Heart left ventricle (tissue), 16 donors: ENCODE measurements at regions of chr12 and their contacts with region 1.

Region 1: DNA sequence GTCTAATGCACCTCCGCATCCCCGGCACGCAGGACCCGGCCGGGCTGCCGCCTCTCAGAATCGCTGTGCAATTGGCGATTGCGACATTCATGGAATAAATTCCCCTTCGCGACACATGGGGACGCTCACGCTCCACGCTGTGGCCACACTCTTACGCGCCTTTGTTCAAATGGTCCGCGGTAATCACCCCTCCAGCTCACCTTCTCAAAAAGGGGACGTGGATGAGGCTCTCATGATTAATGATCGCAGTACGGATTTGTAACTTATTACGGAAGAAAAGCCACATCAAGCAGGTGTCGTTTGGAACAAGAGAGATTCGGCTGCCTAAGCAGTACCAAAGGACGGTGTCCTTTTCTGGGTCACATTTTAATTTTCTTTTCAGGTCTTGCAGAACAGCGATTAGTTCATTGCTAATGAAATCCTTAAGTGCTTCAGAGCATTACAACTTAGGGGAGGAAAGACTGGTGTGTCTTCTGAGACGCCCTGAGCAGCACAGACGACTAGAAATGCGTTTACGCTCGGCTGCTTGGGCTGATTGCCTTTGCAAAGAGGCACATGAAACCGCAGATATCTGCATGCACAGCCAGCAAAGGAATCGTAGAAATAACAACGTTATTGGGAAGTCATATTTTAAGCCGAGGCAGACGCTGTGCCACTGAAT is 37.3 kb upstream of the ADGRD1 start:
- DNase-seq: peak; percentile 53 to 76 (median 59)
- ATAC-seq: peak; percentile 76 to 90 (median 84)
- H3K4me3 ChIP-seq: peak overlapping the region in 5 of 12 donors; percentile 6 to 45 (median 34)
- H3K27ac ChIP-seq: peak overlapping the region in 1 of 12 donors; percentile 39
- H3K4me1 ChIP-seq: peaks cover 0 to 8% (median 0%) of the 10 kb centered on the region in 12 donors
- H3K27me3 ChIP-seq: peaks cover 0 to 12% (median 4%) of the 10 kb centered on the region in 9 donors
- CTCF ChIP-seq: peak; percentile 79 to 99 (median 95)
- POLR2A ChIP-seq: no peak

Region 2: GRCh38 chr12:130796985-130797686 is 119.2 kb before region 1 on chr12:
- intact Hi-C with region 1: no loop called
- DNase-seq: peak in 1 of 5 donors; percentile 37
- ATAC-seq: no peak
- H3K4me3 ChIP-seq: peak overlapping the region in 1 of 12 donors; percentile 1
- H3K27ac ChIP-seq: no peak overlapping the region
- H3K4me1 ChIP-seq: no peaks in the 10 kb centered on the region
- H3K27me3 ChIP-seq: no peaks in the 10 kb centered on the region
- CTCF ChIP-seq: no peak
- POLR2A ChIP-seq: no peak

Region 3: GRCh38 chr12:131092901-131093603 is 176.7 kb after region 1 on chr12:
- intact Hi-C with region 1: loop called in 1 of 10 experiments (anchors 10 kb)
- DNase-seq: peak in 3 of 5 donors; percentile 6 to 29 (median 18)
- ATAC-seq: no peak
- H3K4me3 ChIP-seq: no peak overlapping the region
- H3K27ac ChIP-seq: no peak overlapping the region
- H3K4me1 ChIP-seq: peaks cover 0 to 25% (median 8%) of the 10 kb centered on the region in 12 donors
- H3K27me3 ChIP-seq: no peaks in the 10 kb centered on the region
- CTCF ChIP-seq: no peak
- POLR2A ChIP-seq: no peak

Region 4: GRCh38 chr12:131132118-131132892 is 215.9 kb after region 1 on chr12:
- intact Hi-C with region 1: loop called (anchors 1 to 10 kb)
- DNase-seq: peak; percentile 67 to 87 (median 74)
- ATAC-seq: peak; percentile 45 to 88 (median 62)
- H3K4me3 ChIP-seq: no peak overlapping the region
- H3K27ac ChIP-seq: peak overlapping the region in 3 of 12 donors; percentile 2 to 42 (median 19)
- H3K4me1 ChIP-seq: peaks cover 0 to 17% (median 9%) of the 10 kb centered on the region in 12 donors
- H3K27me3 ChIP-seq: no peaks in the 10 kb centered on the region
- CTCF ChIP-seq: peak; percentile 70 to 93 (median 81)
- POLR2A ChIP-seq: no peak

Region 5: GRCh38 chr12:131701705-131702572 is 785.6 kb after region 1 on chr12:
- intact Hi-C with region 1: loop called in 1 of 10 experiments (anchors 10 kb)
- DNase-seq: no peak
- ATAC-seq: no peak
- H3K4me3 ChIP-seq: no peak overlapping the region
- H3K27ac ChIP-seq: no peak overlapping the region
- H3K4me1 ChIP-seq: no peaks in the 10 kb centered on the region
- H3K27me3 ChIP-seq: peaks cover 0 to 11% (median 0%) of the 10 kb centered on the region in 9 donors
- CTCF ChIP-seq: no peak
- POLR2A ChIP-seq: no peak

Region 6: GRCh38 chr12:132003846-132004245 is 1087.5 kb after region 1 on chr12:
- intact Hi-C with region 1: loop called in 2 of 10 experiments (anchors 10 kb)
- DNase-seq: no peak
- ATAC-seq: no peak
- H3K4me3 ChIP-seq: no peak overlapping the region
- H3K27ac ChIP-seq: no peak overlapping the region
- H3K4me1 ChIP-seq: peaks cover 0 to 3% (median 0%) of the 10 kb centered on the region in 12 donors
- H3K27me3 ChIP-seq: no peaks in the 10 kb centered on the region
- CTCF ChIP-seq: no peak
- POLR2A ChIP-seq: no peak